Activated CD4-positive, alpha-beta T cell treated with anti-CD3 and anti-CD28 coated beads, Interleukin-2, amount 10 ng/mL, durations not matched to agents 24 days and 14 days (primary cell): ENCODE measurements at regions of chr12 and their contacts with region 1.

Region 1: GRCh38 chr12:47858511-47859266 is 39.0 kb upstream of the HDAC7 start:
- DNase-seq: no peak
- H3K4me3 Mint-ChIP-seq: no peak overlapping the region
- H3K27ac Mint-ChIP-seq: peak overlapping the region; percentile 92
- H3K4me1 Mint-ChIP-seq: peaks cover 49% of the 10 kb centered on the region
- H3K27me3 Mint-ChIP-seq: no peaks in the 10 kb centered on the region

Region 2: DNA sequence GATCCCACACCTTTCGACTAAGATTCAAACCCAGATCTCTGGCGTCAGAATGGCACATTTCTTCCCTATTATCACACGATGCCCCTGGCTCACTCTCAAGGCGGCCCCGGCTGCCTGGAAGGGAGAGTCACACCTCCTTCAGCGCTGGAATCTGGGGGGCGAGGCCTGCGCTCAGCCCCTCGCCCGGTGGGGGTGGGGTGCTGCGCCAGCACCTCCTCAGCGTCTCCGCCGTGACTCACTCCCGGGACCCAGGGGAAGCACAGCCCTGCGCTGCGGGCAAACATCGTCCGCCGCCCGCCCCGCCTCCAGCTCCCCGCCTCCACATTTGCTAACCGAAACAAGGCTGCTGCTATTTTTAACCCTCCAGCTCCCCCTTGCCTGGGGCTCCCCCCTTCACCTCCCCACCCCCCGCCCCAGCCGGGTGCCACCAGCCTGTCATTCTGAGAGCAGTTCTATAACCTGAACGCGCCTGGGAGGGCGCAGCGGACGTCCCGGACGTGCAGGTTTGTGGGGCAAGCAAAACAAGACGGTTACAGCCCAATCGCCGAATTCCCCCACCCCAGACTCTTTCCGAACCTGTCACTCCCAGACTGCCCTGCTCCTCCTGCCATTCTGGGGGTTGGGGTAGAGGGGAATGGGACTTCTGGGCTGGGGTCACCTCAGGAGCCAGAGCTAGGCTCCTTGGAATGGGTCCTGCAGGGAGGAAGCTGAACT is 45.7 kb before region 1 on chr12:
- intact Hi-C with region 1: loop called (anchors 2 kb)
- DNase-seq: peak; percentile 97
- H3K4me3 Mint-ChIP-seq: peak overlapping the region; percentile 88
- H3K27ac Mint-ChIP-seq: peak overlapping the region; percentile 99
- H3K4me1 Mint-ChIP-seq: peaks cover 81% of the 10 kb centered on the region
- H3K27me3 Mint-ChIP-seq: no peaks in the 10 kb centered on the region

Region 3: GRCh38 chr12:47832263-47832933 is 26.3 kb before region 1 on chr12:
- intact Hi-C with region 1: loop called (anchors 2 kb)
- DNase-seq: peak; percentile 80
- H3K4me3 Mint-ChIP-seq: peak overlapping the region; percentile 79
- H3K27ac Mint-ChIP-seq: peak overlapping the region; percentile 99
- H3K4me1 Mint-ChIP-seq: peaks cover 86% of the 10 kb centered on the region
- H3K27me3 Mint-ChIP-seq: no peaks in the 10 kb centered on the region

Region 4: DNA sequence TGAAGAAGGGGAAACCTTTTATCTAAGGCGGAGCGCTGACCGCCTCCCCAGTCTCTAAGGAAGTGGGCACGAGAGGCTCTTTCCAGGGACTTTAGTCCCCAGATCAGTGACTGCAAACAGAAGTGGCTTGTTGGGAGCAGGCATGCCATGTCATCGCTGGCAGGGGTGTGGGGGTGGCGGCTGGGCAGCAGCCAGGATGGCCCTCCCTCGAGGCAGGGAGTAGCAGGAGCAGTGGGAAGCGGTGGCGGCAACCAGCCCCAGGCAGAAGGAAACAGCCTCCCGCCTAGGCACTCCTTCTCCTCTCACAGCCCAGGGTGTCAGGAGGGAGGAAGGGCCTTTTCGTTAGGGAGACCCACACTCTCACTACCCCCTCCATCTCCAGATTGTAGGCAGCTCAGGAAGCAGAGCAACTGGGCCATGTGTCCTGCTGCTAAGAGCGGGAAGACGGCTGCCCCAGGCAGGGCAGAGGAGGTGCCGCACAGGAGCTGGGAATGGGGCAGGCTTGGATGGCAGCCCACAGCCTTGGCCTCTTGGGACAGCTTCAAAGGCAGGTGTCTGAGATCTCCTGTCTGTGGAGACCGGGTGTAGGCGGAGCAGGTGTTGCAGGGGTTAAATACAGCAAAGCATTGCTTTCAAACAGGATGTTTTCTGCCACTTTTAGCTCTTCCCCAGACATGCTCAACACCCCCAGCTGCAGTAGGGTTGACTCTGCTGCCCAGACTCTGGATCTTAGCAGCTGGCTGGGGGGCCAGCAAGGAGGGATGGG is 24.3 kb after region 1 on chr12:
- intact Hi-C with region 1: loop called (anchors 1 kb)
- DNase-seq: peak; percentile 84
- H3K4me3 Mint-ChIP-seq: peak overlapping the region; percentile 95
- H3K27ac Mint-ChIP-seq: peak overlapping the region; percentile 99
- H3K4me1 Mint-ChIP-seq: peaks cover 81% of the 10 kb centered on the region
- H3K27me3 Mint-ChIP-seq: no peaks in the 10 kb centered on the region

Region 5: GRCh38 chr12:47949441-47950308 is 91.0 kb after region 1 on chr12:
- intact Hi-C with region 1: loop called (anchors 1 kb)
- DNase-seq: peak; percentile 86
- H3K4me3 Mint-ChIP-seq: no peak overlapping the region
- H3K27ac Mint-ChIP-seq: peak overlapping the region; percentile 45
- H3K4me1 Mint-ChIP-seq: peaks cover 15% of the 10 kb centered on the region
- H3K27me3 Mint-ChIP-seq: peaks cover 10% of the 10 kb centered on the region

Region 6: DNA sequence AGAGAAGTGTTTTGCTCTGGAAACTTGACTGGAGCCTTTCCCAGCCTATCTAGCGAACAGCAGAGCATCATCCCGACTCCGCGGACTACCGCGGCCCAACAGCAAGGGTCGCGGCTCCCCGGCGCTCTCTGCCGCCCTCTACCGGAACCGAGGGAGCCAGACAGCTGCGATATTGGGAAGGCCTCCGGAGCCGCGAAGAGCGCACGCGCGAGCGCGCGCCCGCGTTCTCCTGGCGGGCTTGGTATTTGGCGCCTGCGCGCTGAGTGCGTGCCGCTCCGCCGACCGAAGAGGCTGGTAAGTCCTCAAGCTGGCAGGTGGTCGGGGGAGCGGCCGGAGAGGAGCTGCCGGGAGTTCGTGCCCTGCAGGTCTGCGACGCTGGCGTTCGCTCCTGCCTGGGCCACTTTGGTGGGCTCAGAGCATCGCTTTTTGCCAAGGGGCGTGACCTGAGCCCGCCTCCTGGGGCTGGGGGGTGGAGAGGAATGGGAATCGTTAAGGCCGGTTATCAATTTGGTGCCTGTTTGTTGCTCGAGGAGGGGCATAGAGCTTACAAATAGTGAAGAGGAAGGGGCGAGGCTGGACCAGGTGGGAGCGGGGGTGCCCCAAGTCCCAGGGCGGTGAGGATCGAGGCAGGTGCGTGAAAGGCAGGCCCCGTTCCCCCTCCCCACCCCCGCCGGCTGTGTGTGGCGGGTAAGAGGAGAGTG is 104.8 kb after region 1 on chr12 and contains the start of gene TMEM106C:
- intact Hi-C with region 1: loop called (anchors 2 kb)
- DNase-seq: peak; percentile 98
- H3K4me3 Mint-ChIP-seq: peak within 1 kb of the TSS; percentile 100
- H3K27ac Mint-ChIP-seq: peak within 1 kb of the TSS; percentile 90
- H3K4me1 Mint-ChIP-seq: peaks cover 33% of the 10 kb centered on the region
- H3K27me3 Mint-ChIP-seq: peaks cover 29% of the 10 kb centered on the region
- total RNA-seq, gene TMEM106C: 155 and 162 TPM in 2 replicates